ENCODE measurements at regions of chr2 and their contacts with region 1.

Region 1: DNA sequence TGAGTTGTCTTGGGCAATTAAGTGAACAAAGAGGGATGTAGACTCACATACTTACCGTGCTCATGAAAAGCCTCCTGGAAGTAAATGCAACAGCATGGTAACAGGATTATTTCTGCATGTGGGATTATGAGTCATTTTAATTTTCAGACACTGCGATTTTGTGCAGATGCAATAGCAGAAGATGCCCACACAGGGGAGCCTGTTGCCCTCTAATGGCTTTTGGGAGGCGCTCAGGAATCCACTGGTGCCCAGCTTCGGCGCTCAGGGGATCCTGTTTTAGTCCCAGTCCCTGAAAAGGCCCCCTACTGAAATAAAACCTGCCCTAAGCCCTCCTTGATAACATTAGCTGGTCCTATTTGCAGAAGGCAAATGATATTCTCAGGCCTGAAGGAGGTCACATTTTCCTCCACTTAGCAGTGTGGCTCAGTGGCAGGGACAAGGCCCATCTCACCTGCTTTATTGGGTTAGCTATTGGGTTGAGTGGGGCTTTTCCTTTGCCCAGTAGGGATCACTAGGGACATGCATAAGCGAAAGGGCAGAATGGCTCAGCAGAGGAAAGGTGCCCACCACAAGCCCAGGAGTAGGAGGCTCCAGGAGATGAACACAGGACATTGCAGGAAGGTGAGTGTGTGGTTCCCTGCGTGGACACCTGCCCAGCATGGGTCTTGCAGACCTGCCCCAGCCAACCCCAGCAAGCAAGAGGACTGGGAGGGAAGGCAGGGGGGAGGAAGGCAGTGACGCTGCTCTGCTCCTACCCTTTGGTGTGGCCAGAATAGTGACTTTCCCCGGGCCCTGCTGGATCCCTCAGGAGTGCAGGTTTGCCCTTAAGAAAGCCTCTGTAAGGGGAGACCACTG is 26.5 kb upstream of the KCNS3 start:
- DNase-seq: no peak
- ATAC-seq: no peak
- H3K4me3 ChIP-seq: no peak overlapping the region
- H3K4me3 Mint-ChIP-seq: no peak overlapping the region
- H3K27ac ChIP-seq: no peak overlapping the region
- H3K27ac Mint-ChIP-seq: peak overlapping the region in 1 of 9 donors; percentile 23
- H3K4me1 ChIP-seq: no peaks in the 10 kb centered on the region
- H3K4me1 Mint-ChIP-seq: no peaks in the 10 kb centered on the region
- H3K27me3 ChIP-seq: no peaks in the 10 kb centered on the region
- H3K27me3 Mint-ChIP-seq: peaks cover under 1 to 46% (median 9%) of the 10 kb centered on the region in 5 donors

Region 2: GRCh38 chr2:17918789-17919188 is 66.8 kb after region 1 on chr2:
- CTCF ChIA-PET with region 1: no interaction called
- POLR2A ChIA-PET with region 1: no interaction called
- intact Hi-C with region 1: no loop called
- DNase-seq: no peak
- ATAC-seq: no peak
- H3K4me3 ChIP-seq: no peak overlapping the region
- H3K4me3 Mint-ChIP-seq: no peak overlapping the region
- H3K27ac ChIP-seq: no peak overlapping the region
- H3K27ac Mint-ChIP-seq: no peak overlapping the region
- H3K4me1 ChIP-seq: no peaks in the 10 kb centered on the region
- H3K4me1 Mint-ChIP-seq: no peaks in the 10 kb centered on the region
- H3K27me3 ChIP-seq: no peaks in the 10 kb centered on the region
- H3K27me3 Mint-ChIP-seq: peaks cover 0 to 15% (median 7%) of the 10 kb centered on the region in 5 donors

Region 3: DNA sequence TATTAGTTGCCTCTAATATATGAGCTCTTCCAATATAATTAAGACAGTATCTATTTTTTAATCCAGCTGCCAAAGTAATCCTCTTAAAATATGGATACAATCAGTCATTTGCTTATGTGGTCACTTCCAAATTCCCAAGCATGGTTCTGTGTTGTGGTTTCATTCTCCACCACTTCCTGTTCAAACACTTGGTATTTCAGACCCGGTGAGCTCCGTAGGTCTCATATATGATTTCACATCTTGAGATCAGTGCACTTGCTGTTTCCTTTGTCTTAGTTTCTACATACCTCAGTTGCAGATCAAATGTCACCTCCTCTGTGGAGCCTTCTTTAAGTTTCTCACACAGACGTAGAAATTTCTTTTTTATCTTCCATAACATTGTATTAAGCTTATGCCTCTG is 280.7 kb after region 1 on chr2:
- CTCF ChIA-PET with region 1: no interaction called
- POLR2A ChIA-PET with region 1: no interaction called
- intact Hi-C with region 1: no loop called
- DNase-seq: no peak
- ATAC-seq: no peak
- H3K4me3 ChIP-seq: no peak overlapping the region
- H3K4me3 Mint-ChIP-seq: no peak overlapping the region
- H3K27ac ChIP-seq: no peak overlapping the region
- H3K27ac Mint-ChIP-seq: no peak overlapping the region
- H3K4me1 ChIP-seq: no peaks in the 10 kb centered on the region
- H3K4me1 Mint-ChIP-seq: peaks cover 0 to 5% (median 4%) of the 10 kb centered on the region in 7 donors
- H3K27me3 ChIP-seq: no peaks in the 10 kb centered on the region
- H3K27me3 Mint-ChIP-seq: peaks cover 0 to 6% (median 0%) of the 10 kb centered on the region in 5 donors

Region 4: GRCh38 chr2:18149645-18150246 is 297.8 kb after region 1 on chr2:
- CTCF ChIA-PET with region 1: no interaction called
- POLR2A ChIA-PET with region 1: no interaction called
- intact Hi-C with region 1: loop called in 1 of 2 experiments (anchors 1 kb)
- DNase-seq: no peak
- ATAC-seq: no peak
- H3K4me3 ChIP-seq: no peak overlapping the region
- H3K4me3 Mint-ChIP-seq: no peak overlapping the region
- H3K27ac ChIP-seq: no peak overlapping the region
- H3K27ac Mint-ChIP-seq: no peak overlapping the region
- H3K4me1 ChIP-seq: no peaks in the 10 kb centered on the region
- H3K4me1 Mint-ChIP-seq: no peaks in the 10 kb centered on the region
- H3K27me3 ChIP-seq: no peaks in the 10 kb centered on the region
- H3K27me3 Mint-ChIP-seq: peaks cover 0 to 26% (median 8%) of the 10 kb centered on the region in 5 donors

Region 5: GRCh38 chr2:18178736-18179349 is 326.9 kb after region 1 on chr2:
- CTCF ChIA-PET with region 1: no interaction called
- POLR2A ChIA-PET with region 1: no interaction called
- intact Hi-C with region 1: loop called in 1 of 2 experiments (anchors 1 kb)
- DNase-seq: peak in 3 of 9 donors; percentile 7 to 14 (median 9)
- ATAC-seq: no peak
- H3K4me3 ChIP-seq: no peak overlapping the region
- H3K4me3 Mint-ChIP-seq: no peak overlapping the region
- H3K27ac ChIP-seq: no peak overlapping the region
- H3K27ac Mint-ChIP-seq: no peak overlapping the region
- H3K4me1 ChIP-seq: no peaks in the 10 kb centered on the region
- H3K4me1 Mint-ChIP-seq: no peaks in the 10 kb centered on the region
- H3K27me3 ChIP-seq: no peaks in the 10 kb centered on the region
- H3K27me3 Mint-ChIP-seq: peaks cover 0 to 9% (median 1%) of the 10 kb centered on the region in 5 donors

Region 6: GRCh38 chr2:18378020-18378653 is 526.2 kb after region 1 on chr2:
- CTCF ChIA-PET with region 1: no interaction called
- POLR2A ChIA-PET with region 1: no interaction called
- intact Hi-C with region 1: loop called in 1 of 2 experiments (anchors 2 kb)
- DNase-seq: peak in 5 of 9 donors; percentile 9 to 24 (median 20)
- ATAC-seq: peak; percentile 53
- H3K4me3 ChIP-seq: no peak overlapping the region
- H3K4me3 Mint-ChIP-seq: no peak overlapping the region
- H3K27ac ChIP-seq: no peak overlapping the region
- H3K27ac Mint-ChIP-seq: no peak overlapping the region
- H3K4me1 ChIP-seq: no peaks in the 10 kb centered on the region
- H3K4me1 Mint-ChIP-seq: no peaks in the 10 kb centered on the region
- H3K27me3 ChIP-seq: no peaks in the 10 kb centered on the region
- H3K27me3 Mint-ChIP-seq: peaks cover 6 to 21% (median 20%) of the 10 kb centered on the region in 5 donors

Measured in naive thymus-derived CD4-positive, alpha-beta T cell (primary cell).